Activated CD8-positive, alpha-beta T cell treated with anti-CD3 and anti-CD28 coated beads, Interleukin-2, amount 10 ng/mL, durations not matched to agents 7 days and 5 days (primary cell): ENCODE measurements at regions of chr19 and their contacts with region 1.

Region 1: GRCh38 chr19:49409441-49410029 is 13.7 kb downstream of the PTH2 start:
- DNase-seq: peak; percentile 61
- ATAC-seq: peak; percentile 74
- H3K4me3 Mint-ChIP-seq: peak overlapping the region; percentile 30
- H3K27ac Mint-ChIP-seq: peak overlapping the region; percentile 84
- H3K4me1 Mint-ChIP-seq: peaks cover 58% of the 10 kb centered on the region
- H3K27me3 Mint-ChIP-seq: peaks cover 3% of the 10 kb centered on the region

Region 2: DNA sequence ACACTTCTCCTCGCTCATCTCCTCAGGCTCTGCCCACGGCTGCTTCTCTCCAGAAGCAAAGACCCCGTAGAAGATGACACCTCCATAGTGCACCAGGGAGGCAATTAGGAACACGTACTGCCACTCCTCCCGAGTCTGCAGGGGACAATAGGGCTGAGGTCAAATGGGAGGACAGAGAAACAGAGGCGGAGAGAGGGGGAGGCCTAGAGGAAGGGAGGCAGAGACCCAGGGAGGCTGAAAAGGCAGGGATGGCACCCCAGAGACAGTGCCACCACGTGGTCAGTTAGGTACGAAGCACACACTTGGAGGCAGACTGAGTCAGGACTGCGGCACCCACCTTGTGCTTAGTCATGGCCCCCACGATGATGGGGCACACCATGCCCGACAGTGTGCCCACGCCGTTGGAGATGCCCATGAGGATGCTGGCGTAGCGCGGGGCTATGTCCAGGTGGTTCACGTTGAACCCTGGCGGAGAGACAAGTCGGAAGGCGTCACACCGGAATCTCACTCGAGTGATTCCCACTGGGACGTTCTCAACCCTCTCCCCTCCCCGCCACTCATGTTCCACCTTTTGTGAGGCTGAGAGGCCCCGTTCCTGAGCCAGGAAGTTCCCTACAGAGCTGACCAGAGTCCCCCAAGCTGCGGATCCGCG is 21.3 kb after region 1 on chr19:
- CTCF ChIA-PET with region 1: interaction called, 10 read pairs
- POLR2A ChIA-PET with region 1: no interaction called
- DNase-seq: peak; percentile 50
- ATAC-seq: no peak
- H3K4me3 Mint-ChIP-seq: no peak overlapping the region
- H3K27ac Mint-ChIP-seq: peak overlapping the region; percentile 43
- H3K4me1 Mint-ChIP-seq: peaks cover 48% of the 10 kb centered on the region
- H3K27me3 Mint-ChIP-seq: peaks cover 77% of the 10 kb centered on the region

Region 3: DNA sequence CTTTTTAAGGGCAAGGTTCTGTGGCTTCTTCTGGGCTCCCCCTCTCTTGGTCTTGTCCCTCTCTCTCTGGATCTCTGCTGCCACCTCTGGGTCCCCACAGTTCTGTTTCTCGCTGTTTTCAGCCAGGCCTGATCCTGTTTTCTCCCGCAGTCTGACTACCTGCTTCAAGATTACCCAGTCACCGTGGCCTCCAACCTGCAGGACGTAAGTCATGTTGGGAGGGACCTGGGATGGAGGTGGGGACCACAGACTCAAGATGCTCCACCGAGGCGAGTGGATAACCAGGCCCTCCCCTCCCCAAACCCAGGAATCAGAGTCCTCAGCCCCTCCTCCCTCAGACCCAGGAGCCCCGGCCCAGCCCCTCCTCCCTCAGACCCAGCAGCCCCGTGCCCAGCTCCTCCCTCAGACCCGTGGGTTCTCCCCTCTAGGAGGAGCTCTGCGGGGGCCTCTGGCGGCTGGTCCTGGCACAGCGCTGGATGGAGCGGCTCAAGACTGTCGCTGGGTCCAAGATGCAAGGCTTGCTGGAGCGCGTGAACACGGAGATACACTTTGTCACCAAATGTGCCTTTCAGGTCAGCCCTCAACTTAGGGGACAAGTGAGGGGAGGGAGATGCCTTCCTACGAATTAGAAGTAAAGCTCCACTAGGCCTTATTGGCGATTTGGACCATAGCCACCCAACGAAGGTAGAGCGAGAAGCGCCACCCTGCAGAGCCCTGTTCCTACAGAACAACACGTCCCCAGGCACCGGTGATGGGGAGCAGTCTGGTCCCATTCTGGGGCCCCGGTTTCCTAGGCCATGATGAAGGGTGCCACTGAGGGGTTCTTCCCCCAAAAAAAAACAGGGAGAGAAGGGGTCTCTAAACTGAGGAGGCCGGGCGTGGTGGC is 66.7 kb after region 1 on chr19:
- CTCF ChIA-PET with region 1: no interaction called
- POLR2A ChIA-PET with region 1: no interaction called
- DNase-seq: peak; percentile 86
- ATAC-seq: peak; percentile 54
- H3K4me3 Mint-ChIP-seq: peak overlapping the region; percentile 94
- H3K27ac Mint-ChIP-seq: peak overlapping the region; percentile 94
- H3K4me1 Mint-ChIP-seq: peaks cover 48% of the 10 kb centered on the region
- H3K27me3 Mint-ChIP-seq: no peaks in the 10 kb centered on the region